MCF 10A (cell line): ENCODE measurements at regions of chr6 and their contacts with region 1.

Region 1: GRCh38 chr6:128520436-128521281 is at the start of gene PTPRK:
- DNase-seq: peak; percentile 93
- H3K4me3 Mint-ChIP-seq: peak within 1 kb of the TSS; percentile 97
- H3K27ac Mint-ChIP-seq: peak within 1 kb of the TSS; percentile 97
- H3K4me1 Mint-ChIP-seq: peaks cover 15% of the 10 kb centered on the region
- H3K27me3 Mint-ChIP-seq: no peaks in the 10 kb centered on the region
- CTCF ChIP-seq: peak; percentile 72
- total RNA-seq, gene PTPRK: 50.2 and 55.5 TPM in 2 replicates

Region 2: DNA sequence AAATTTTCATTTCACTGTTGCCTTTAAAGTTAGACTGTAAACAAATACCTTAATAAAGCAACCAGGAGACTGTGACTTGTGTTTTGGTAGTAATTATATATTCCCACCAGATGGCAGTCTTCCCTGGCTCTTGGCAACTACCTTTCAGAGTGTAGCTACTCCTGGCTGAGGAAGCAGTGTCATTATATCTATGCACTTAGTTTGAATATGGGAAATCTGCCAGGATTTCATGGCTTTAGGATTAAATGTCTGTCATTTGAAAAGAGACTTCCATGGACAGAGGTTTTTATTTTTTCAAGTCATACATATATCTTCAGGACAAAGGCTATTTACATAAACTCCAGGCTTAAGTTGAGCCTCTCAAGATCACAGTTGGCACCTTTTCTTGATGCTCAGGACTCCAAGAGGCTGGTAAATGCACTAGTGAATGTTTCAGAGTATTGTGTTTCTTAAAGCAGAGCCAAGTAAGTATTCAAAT is 783.6 kb before region 1 on chr6:
- CTCF ChIA-PET with region 1: interaction called, 6 read pairs
- POLR2A ChIA-PET with region 1: interaction called, 7 read pairs
- intact Hi-C with region 1: loop called (anchors 1 kb)
- DNase-seq: peak; percentile 77
- H3K4me3 Mint-ChIP-seq: no peak overlapping the region
- H3K27ac Mint-ChIP-seq: no peak overlapping the region
- H3K4me1 Mint-ChIP-seq: no peaks in the 10 kb centered on the region
- H3K27me3 Mint-ChIP-seq: peaks cover 14% of the 10 kb centered on the region
- CTCF ChIP-seq: peak; percentile 70

Region 3: GRCh38 chr6:128139519-128139918 is 381.1 kb before region 1 on chr6:
- CTCF ChIA-PET with region 1: no interaction called
- POLR2A ChIA-PET with region 1: interaction called, 3 read pairs
- intact Hi-C with region 1: loop called (anchors 10 kb)
- DNase-seq: peak; percentile 67
- H3K4me3 Mint-ChIP-seq: no peak overlapping the region
- H3K27ac Mint-ChIP-seq: no peak overlapping the region
- H3K4me1 Mint-ChIP-seq: peaks cover 22% of the 10 kb centered on the region
- H3K27me3 Mint-ChIP-seq: no peaks in the 10 kb centered on the region
- CTCF ChIP-seq: no peak

Region 4: GRCh38 chr6:128508588-128509296 is 11.9 kb before region 1 on chr6:
- CTCF ChIA-PET with region 1: interaction called, 16 read pairs
- POLR2A ChIA-PET with region 1: interaction called, 90 read pairs
- intact Hi-C with region 1: no loop called
- DNase-seq: peak; percentile 95
- H3K4me3 Mint-ChIP-seq: peak overlapping the region; percentile 68
- H3K27ac Mint-ChIP-seq: peak overlapping the region; percentile 85
- H3K4me1 Mint-ChIP-seq: peaks cover 49% of the 10 kb centered on the region
- H3K27me3 Mint-ChIP-seq: no peaks in the 10 kb centered on the region
- CTCF ChIP-seq: no peak

Region 5: GRCh38 chr6:128598565-128598964 is 77.9 kb after region 1 on chr6:
- CTCF ChIA-PET with region 1: interaction called, 4 read pairs
- POLR2A ChIA-PET with region 1: interaction called, 35 read pairs
- intact Hi-C with region 1: no loop called
- DNase-seq: peak; percentile 23
- H3K4me3 Mint-ChIP-seq: no peak overlapping the region
- H3K27ac Mint-ChIP-seq: peak overlapping the region; percentile 30
- H3K4me1 Mint-ChIP-seq: peaks cover 52% of the 10 kb centered on the region
- H3K27me3 Mint-ChIP-seq: no peaks in the 10 kb centered on the region
- CTCF ChIP-seq: no peak